ENCODE measurements at regions of chr10 and their contacts with region 1.

Region 1: DNA sequence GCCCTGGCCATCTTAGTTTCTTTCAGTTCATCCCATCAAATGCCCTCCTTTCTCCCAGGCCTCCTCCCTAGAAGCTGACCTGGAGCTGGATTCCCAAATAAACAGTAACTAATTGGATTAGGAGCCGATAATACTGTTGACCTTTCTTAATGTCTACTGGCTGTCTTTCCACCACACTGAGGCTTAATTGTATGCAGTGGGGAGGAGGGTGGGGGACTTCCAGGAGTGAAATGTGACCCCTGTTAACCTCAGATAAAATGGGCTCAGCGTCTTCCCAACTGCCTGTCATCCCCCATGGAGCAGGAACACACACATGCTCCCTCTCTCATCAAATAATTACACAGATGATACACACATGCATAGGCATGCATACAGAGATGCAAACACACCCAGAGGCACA is 53.7 kb upstream of the LBX1 start:
- DNase-seq: no peak
- H3K4me3 ChIP-seq: no peak overlapping the region
- H3K27ac ChIP-seq: no peak overlapping the region
- H3K4me1 ChIP-seq: peaks cover 26 to 38% (median 29%) of the 10 kb centered on the region in 4 experiments
- H3K27me3 ChIP-seq: peaks cover 26 to 60% (median 52%) of the 10 kb centered on the region in 4 experiments
- CTCF ChIP-seq: no peak
- EP300 ChIP-seq: no peak
- POLR2A ChIP-seq: no peak
- RAD21 ChIP-seq: no peak

Region 2: DNA sequence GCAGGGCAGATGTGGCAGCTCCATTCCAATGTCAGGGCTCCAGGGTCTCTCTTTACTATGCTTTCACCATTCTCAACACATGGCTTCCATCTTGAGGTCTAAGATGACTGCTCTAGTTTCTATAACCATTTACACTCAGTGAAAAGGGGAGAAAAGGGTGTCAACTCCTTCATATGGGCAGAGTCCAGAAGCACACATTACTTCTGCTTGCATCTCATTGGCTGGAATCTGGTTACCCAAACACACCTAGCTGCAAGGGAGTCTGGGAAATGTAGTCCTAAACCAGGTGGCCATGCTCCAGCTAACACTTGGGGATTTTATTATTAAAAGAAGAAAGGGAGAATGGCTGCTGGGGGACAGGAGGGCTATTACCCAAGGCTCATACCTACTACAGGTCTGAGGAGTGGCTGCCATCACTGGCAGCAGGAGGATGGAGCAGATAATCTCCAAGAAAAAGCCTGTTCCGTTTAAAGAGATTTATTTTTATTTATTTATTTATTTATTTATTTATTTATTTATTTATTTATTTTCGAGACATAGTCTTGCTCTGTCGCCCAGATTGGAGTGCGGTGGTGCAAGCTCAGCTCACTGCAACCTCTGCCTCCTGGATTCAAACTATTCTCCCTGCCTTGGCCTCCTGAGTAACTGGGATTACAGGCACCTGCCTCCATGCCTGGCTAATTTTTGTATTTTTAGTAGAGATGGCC is 24.6 kb before region 1 on chr10:
- CTCF ChIA-PET with region 1: interaction called, 317 read pairs
- POLR2A ChIA-PET with region 1: interaction called, 4 read pairs
- DNase-seq: no peak
- H3K4me3 ChIP-seq: no peak overlapping the region
- H3K27ac ChIP-seq: no peak overlapping the region
- H3K4me1 ChIP-seq: peaks cover 2 to 19% (median 10%) of the 10 kb centered on the region in 4 experiments
- H3K27me3 ChIP-seq: peaks cover 0 to 4% (median under 1%) of the 10 kb centered on the region in 4 experiments; a peak in 4 of 7 replicates
- CTCF ChIP-seq: no peak
- EP300 ChIP-seq: no peak
- POLR2A ChIP-seq: no peak
- RAD21 ChIP-seq: no peak

Region 3: DNA sequence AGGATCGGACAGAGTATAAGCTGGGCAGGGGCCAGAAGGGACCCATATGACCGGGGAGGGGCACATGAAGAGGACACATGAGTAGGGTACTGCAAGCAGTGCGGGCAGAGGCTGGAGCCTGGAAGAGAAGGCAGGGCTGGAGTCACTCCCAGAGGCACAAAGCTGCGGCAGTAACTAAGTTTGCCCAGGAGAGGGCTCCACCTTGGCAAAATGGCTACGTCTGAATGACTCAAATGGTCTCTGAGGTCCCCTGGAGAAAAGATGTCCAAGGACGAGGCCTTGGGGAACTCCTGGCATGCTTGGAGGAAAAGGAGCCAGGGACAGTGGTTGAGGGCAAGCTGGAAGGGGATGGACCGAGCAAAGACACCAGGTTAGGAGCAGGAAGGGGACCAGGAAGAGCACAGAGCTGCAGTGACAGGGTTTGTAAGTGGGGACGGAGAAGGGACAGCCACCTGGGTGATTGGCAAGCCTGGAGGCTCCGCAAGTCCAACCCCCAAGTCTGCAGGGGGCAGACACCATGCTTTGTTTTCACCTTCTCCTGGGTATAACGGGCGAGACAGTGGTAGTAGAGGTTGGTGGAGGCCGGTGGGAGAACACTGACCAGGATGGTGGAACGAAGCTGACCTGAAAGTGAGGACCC is 10.6 kb before region 1 on chr10:
- CTCF ChIA-PET with region 1: interaction called, 317 read pairs
- POLR2A ChIA-PET with region 1: interaction called, 10 read pairs
- DNase-seq: peak; percentile 65 to 90
- H3K4me3 ChIP-seq: peak overlapping the region in 1 of 4 experiments; percentile 14; a peak in 1 of 8 replicates
- H3K27ac ChIP-seq: no peak overlapping the region
- H3K4me1 ChIP-seq: peaks cover 4 to 8% (median 6%) of the 10 kb centered on the region in 4 experiments; a peak in 5 of 7 replicates
- H3K27me3 ChIP-seq: no peaks in the 10 kb centered on the region; a peak in 3 of 7 replicates
- CTCF ChIP-seq: peak; percentile 80 to 93 (median 82)
- EP300 ChIP-seq: no peak
- POLR2A ChIP-seq: no peak
- RAD21 ChIP-seq: peak; percentile 57 to 65

Region 4: GRCh38 chr10:101671453-101671852 is 388.5 kb after region 1 on chr10:
- CTCF ChIA-PET with region 1: no interaction called
- POLR2A ChIA-PET with region 1: no interaction called
- DNase-seq: no peak
- H3K4me3 ChIP-seq: no peak overlapping the region
- H3K27ac ChIP-seq: no peak overlapping the region
- H3K4me1 ChIP-seq: no peaks in the 10 kb centered on the region
- H3K27me3 ChIP-seq: no peaks in the 10 kb centered on the region
- CTCF ChIP-seq: no peak
- EP300 ChIP-seq: no peak
- POLR2A ChIP-seq: no peak
- RAD21 ChIP-seq: no peak